BJ (cell line): ENCODE measurements at regions of chr3 and their contacts with region 1.

Region 1: GRCh38 chr3:135965506-135966270 is at the start of gene PPP2R3A:
- DNase-seq: peak; percentile 27
- H3K4me3 ChIP-seq: peak within 1 kb of the TSS; percentile 60
- H3K27me3 ChIP-seq: no peaks in the 10 kb centered on the region
- CTCF ChIP-seq: no peak
- polyA plus RNA-seq, gene PPP2R3A: 7.4 and 13.5 TPM in 2 replicates

Region 2: DNA sequence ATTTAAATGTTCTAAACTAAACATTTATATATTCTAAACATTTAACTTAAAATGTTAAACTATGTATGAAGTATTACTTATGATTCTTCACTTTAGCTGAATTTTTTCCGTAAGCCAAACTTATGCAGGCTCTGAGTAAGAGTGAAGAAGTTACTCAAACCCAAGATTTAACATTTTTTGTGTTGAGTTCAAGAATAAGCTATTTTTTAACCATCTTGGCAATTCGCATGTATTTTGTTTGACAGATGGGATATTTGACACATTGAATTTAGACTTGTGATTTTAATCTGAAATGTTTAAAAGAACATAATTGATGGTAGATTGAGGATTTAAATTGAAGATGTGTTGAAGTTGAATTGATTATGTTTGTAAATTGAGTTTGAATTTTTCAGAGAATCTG is 14.7 kb before region 1 on chr3:
- CTCF ChIA-PET with region 1: no interaction called
- POLR2A ChIA-PET with region 1: no interaction called
- DNase-seq: no peak
- H3K4me3 ChIP-seq: no peak overlapping the region
- H3K27me3 ChIP-seq: no peaks in the 10 kb centered on the region
- CTCF ChIP-seq: no peak

Region 3: DNA sequence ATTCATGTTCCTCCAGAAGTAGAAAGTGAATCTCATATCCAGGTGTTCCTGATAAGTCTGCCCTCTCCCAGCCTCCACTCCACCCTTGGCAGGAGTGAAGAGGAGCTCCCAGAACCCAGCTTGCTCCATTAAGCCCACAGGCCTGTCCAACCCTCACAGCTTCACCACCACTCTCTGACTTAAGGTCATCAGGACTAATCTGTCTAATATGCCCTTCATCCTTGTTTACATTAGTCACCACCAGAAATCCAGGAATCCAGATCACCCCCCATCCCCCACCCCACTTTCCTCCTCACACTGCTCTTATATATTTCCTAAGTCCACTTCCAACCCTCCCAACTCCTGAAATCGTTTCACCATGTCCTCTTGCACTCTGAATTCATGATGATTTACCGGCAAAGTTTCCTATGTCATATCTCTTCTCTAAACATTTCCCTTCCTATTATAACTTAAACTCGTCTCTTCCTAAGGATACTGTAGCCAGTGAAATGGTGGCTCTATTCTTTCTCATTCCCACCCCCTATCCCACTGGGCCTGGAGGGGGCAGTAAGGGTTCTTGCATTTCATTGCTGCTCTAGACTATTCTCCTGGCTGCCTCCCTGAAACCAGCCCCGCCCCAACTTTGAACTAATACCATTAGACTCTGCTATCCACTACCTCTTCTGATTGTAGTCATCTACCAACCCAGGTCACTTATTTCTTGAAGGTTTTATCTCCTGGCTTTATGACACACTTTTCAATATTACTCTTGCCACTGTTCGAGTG is 43.2 kb after region 1 on chr3:
- CTCF ChIA-PET with region 1: no interaction called
- POLR2A ChIA-PET with region 1: interaction called, 10 read pairs
- DNase-seq: no peak
- H3K4me3 ChIP-seq: no peak overlapping the region
- H3K27me3 ChIP-seq: no peaks in the 10 kb centered on the region
- CTCF ChIP-seq: no peak